ENCODE measurements at regions of chr20 and their contacts with region 1.

Region 1: GRCh38 chr20:2470423-2471193 is at the start of gene SNRPB:
- DNase-seq: peak; percentile 94 to 99 (median 95)
- ATAC-seq: peak; percentile 93
- H3K4me3 ChIP-seq: peak within 1 kb of the TSS; percentile 90
- H3K4me3 Mint-ChIP-seq: peak within 1 kb of the TSS; percentile 98
- H3K27ac ChIP-seq: peak within 1 kb of the TSS; percentile 91 to 96
- H3K27ac Mint-ChIP-seq: peak within 1 kb of the TSS; percentile 98
- H3K4me1 ChIP-seq: peaks cover 23% of the 10 kb centered on the region
- H3K4me1 Mint-ChIP-seq: peaks cover 54% of the 10 kb centered on the region
- H3K27me3 ChIP-seq: no peaks in the 10 kb centered on the region
- H3K27me3 Mint-ChIP-seq: no peaks in the 10 kb centered on the region
- CTCF ChIP-seq: no peak
- total RNA-seq, gene SNRPB: 146 to 147 TPM

Region 2: DNA sequence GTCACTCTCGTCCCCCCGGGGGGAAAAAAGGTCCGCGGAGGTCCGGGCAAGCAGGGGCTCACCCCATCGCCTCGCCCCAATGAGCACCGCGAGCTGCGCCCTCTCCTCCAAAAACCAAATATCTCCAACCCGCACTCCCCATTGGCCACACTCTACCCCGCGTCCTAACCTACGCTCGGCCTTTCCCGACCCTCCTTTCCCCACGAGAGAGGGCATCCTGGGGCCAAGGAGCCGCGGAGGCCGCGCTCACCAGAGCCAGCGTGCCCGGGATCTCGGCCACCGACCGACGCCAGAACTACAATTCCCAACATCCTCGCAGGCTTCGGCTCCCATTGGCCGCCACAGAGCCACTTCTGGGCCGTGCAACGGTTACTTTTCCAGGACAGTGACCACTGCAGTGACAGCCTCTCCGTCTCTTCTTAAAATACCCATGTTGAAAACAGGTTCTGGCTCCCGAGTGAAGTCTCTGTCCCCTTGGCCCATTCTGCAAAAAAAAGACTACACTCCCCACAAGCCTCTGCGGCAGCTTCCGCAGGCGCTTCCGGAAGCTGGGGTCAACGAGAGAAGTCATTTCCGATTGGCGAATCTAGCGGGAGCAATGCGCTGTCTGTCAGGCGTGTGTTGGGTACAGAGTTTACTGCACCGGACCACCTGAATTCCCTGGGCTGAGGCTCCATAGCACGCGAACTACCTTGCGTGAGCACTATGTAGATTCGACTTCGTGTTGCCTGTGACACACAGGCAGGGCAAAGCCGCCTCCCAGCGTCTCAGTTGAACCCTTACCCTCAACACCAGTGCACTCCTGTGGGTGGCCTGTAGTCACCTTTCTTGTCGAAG is 38.2 kb after region 1 on chr20 and contains the start of gene ZNF343:
- CTCF ChIA-PET with region 1: no interaction called
- POLR2A ChIA-PET with region 1: interaction called, 38 read pairs
- intact Hi-C with region 1: loop called (anchors 1 kb)
- DNase-seq: peak; percentile 58 to 89 (median 71)
- ATAC-seq: peak; percentile 94
- H3K4me3 ChIP-seq: peak within 1 kb of the TSS; percentile 90
- H3K4me3 Mint-ChIP-seq: peak within 1 kb of the TSS; percentile 99
- H3K27ac ChIP-seq: peak within 1 kb of the TSS in 1 of 2 donors; percentile 72
- H3K27ac Mint-ChIP-seq: peak within 1 kb of the TSS; percentile 81
- H3K4me1 ChIP-seq: peaks cover 21% of the 10 kb centered on the region
- H3K4me1 Mint-ChIP-seq: peaks cover 29% of the 10 kb centered on the region
- H3K27me3 ChIP-seq: peaks cover 0 to 13% of the 10 kb centered on the region in 2 experiments
- H3K27me3 Mint-ChIP-seq: peaks cover 25% of the 10 kb centered on the region
- CTCF ChIP-seq: no peak
- total RNA-seq, gene ZNF343: 5.0 to 5.1 TPM

Region 3: GRCh38 chr20:2663887-2664719 is 193.5 kb after region 1 on chr20 and contains the start of gene IDH3B:
- CTCF ChIA-PET with region 1: no interaction called
- POLR2A ChIA-PET with region 1: interaction called, 11 read pairs
- intact Hi-C with region 1: no loop called
- DNase-seq: peak; percentile 83 to 96 (median 89)
- ATAC-seq: peak; percentile 99
- H3K4me3 ChIP-seq: peak within 1 kb of the TSS; percentile 90
- H3K4me3 Mint-ChIP-seq: peak within 1 kb of the TSS; percentile 94
- H3K27ac ChIP-seq: peak within 1 kb of the TSS; percentile 77 to 96
- H3K27ac Mint-ChIP-seq: peak within 1 kb of the TSS; percentile 91
- H3K4me1 ChIP-seq: peaks cover 18% of the 10 kb centered on the region
- H3K4me1 Mint-ChIP-seq: peaks cover 28% of the 10 kb centered on the region
- H3K27me3 ChIP-seq: no peaks in the 10 kb centered on the region
- H3K27me3 Mint-ChIP-seq: no peaks in the 10 kb centered on the region
- CTCF ChIP-seq: no peak
- total RNA-seq, gene IDH3B: 171 to 181 TPM